ENCODE measurements at regions of chr3 and their contacts with region 1.

Region 1: GRCh38 chr3:138186803-138187295 is 252 bp upstream of the ARMC8 start:
- DNase-seq: peak; percentile 93
- ATAC-seq: peak; percentile 96
- H3K4me3 Mint-ChIP-seq: peak overlapping the region; percentile 86
- H3K27ac Mint-ChIP-seq: peak overlapping the region; percentile 98
- H3K4me1 Mint-ChIP-seq: peaks cover 31% of the 10 kb centered on the region
- H3K27me3 Mint-ChIP-seq: peaks cover 3% of the 10 kb centered on the region
- CTCF ChIP-seq: no peak

Region 2: GRCh38 chr3:138174421-138175122 is 12.3 kb before region 1 on chr3 and contains the start of gene DBR1:
- CTCF ChIA-PET with region 1: interaction called, 11 read pairs
- POLR2A ChIA-PET with region 1: interaction called, 46 read pairs
- intact Hi-C with region 1: no loop called
- DNase-seq: peak; percentile 84
- ATAC-seq: peak; percentile 90
- H3K4me3 Mint-ChIP-seq: peak within 1 kb of the TSS; percentile 98
- H3K27ac Mint-ChIP-seq: peak within 1 kb of the TSS; percentile 98
- H3K4me1 Mint-ChIP-seq: peaks cover 29% of the 10 kb centered on the region
- H3K27me3 Mint-ChIP-seq: no peaks in the 10 kb centered on the region
- CTCF ChIP-seq: no peak
- total RNA-seq, gene DBR1: 21.2 to 22.7 TPM

Region 3: GRCh38 chr3:138230525-138230924 is 43.7 kb after region 1 on chr3:
- CTCF ChIA-PET with region 1: interaction called, 3 read pairs
- POLR2A ChIA-PET with region 1: interaction called, 3 read pairs
- intact Hi-C with region 1: loop called (anchors 10 kb)
- DNase-seq: no peak
- ATAC-seq: no peak
- H3K4me3 Mint-ChIP-seq: no peak overlapping the region
- H3K27ac Mint-ChIP-seq: no peak overlapping the region
- H3K4me1 Mint-ChIP-seq: peaks cover 19% of the 10 kb centered on the region
- H3K27me3 Mint-ChIP-seq: no peaks in the 10 kb centered on the region
- CTCF ChIP-seq: no peak

Measured in activated CD8-positive, alpha-beta T cell treated with anti-CD3 and anti-CD28 coated beads for 36 hours (primary cell).